PC-3 (cell line): ENCODE measurements at regions of chr1 and their contacts with region 1.

Region 1: DNA sequence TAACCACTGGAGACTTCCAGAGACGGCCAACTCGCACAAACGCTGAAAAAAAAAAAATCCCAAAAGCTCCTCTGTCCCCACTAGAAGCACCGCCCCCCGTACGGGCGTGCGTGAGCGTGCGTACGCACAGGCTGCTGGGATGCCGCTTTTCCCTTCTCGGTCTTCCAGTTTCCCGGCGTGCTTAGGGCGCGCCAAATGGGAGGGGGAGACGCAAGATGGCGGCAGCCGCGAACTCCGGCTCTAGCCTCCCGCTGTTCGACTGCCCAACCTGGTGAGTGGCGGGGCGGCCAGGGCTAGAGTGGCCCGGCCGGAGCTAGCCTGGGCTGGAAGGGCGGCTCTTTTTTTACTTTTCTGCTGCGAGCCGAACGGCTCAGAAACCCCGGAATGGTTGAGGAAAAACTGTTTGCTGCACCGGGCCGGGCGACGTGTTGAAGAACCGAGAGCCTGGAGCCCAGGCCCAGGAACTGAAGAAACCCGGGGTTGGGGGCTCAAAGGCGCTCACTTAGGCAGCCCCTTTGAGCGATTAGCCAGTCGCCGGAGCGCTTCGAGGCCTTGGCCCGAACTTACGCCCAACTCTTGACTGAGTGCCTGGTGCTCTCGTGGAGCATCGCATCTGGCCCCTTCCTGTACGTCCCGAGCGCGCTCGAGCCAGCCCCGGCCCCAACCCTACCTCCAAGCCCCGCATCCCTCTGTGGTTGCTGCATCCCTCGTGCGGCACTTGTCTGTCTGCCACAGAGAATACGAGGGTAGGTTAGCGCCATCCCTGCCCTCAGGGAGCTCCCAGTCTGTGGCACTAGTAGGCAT is at the start of gene PPP1R8:
- DNase-seq: peak; percentile 98
- ATAC-seq: peak; percentile 99
- H3K4me3 ChIP-seq: peak within 1 kb of the TSS; percentile 95
- H3K27ac ChIP-seq: peak within 1 kb of the TSS; percentile 55
- H3K4me1 ChIP-seq: peaks cover 19% of the 10 kb centered on the region
- H3K27me3 ChIP-seq: no peaks in the 10 kb centered on the region
- CTCF ChIP-seq: no peak
- total RNA-seq, gene PPP1R8: 65.7 and 85.0 TPM in 2 replicates

Region 2: GRCh38 chr1:27671964-27672749 is 158.7 kb before region 1 on chr1 and contains the start of gene IFI6:
- CTCF ChIA-PET with region 1: no interaction called
- POLR2A ChIA-PET with region 1: interaction called, 3 read pairs
- intact Hi-C with region 1: loop called (anchors 5 kb)
- DNase-seq: peak; percentile 95
- ATAC-seq: peak; percentile 98
- H3K4me3 ChIP-seq: peak within 1 kb of the TSS; percentile 67
- H3K27ac ChIP-seq: peak within 1 kb of the TSS; percentile 3
- H3K4me1 ChIP-seq: peaks cover 13% of the 10 kb centered on the region; the same call in 1 of the 2 replicates
- H3K27me3 ChIP-seq: no peaks in the 10 kb centered on the region
- CTCF ChIP-seq: peak; percentile 50
- total RNA-seq, gene IFI6: 15.7 and 16.5 TPM in 2 replicates

Region 3: DNA sequence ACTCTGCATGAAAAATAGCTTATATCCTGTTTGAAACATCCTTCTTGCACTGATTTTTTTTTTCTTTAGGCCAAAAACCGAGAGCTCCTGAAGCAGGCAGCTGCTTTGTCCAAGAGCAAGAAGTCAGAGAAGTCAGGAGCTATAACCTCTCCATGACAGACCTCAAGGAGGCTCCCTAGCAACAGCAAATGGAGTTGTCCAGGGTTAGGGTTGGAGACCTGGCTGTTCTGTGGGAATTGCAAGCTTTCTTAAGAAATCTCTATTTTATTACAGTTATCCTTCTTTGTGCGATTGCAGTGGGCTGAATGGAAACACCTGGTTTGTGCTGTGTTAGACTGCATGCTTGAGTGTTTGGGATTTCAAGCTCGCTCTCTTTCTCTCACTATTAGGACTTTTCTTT is 70.4 kb before region 1 on chr1:
- CTCF ChIA-PET with region 1: no interaction called
- POLR2A ChIA-PET with region 1: interaction called, 10 read pairs
- intact Hi-C with region 1: no loop called
- DNase-seq: no peak
- ATAC-seq: no peak
- H3K4me3 ChIP-seq: no peak overlapping the region
- H3K27ac ChIP-seq: no peak overlapping the region
- H3K4me1 ChIP-seq: no peaks in the 10 kb centered on the region
- H3K27me3 ChIP-seq: no peaks in the 10 kb centered on the region
- CTCF ChIP-seq: no peak

Region 4: DNA sequence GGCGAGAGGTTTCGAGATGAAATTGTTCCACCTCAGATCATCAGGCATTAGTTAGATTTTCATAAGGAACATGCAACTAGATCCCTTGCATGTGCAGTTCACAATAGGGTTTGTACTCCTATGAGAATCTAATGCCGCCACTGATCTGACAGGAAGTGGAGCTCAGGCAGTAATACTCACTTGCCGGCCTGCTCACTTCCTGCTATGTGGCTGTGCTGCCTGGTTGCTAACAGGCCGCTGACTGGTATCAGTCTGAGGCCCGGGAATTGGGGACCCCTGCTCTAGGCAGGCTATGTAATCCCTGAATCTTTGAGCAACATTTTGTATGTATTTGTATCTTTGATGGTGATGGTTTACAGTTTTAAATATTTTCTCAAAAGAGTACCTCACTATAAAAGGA is 161.5 kb after region 1 on chr1:
- CTCF ChIA-PET with region 1: no interaction called
- POLR2A ChIA-PET with region 1: interaction called, 12 read pairs
- intact Hi-C with region 1: no loop called
- DNase-seq: no peak
- ATAC-seq: no peak
- H3K4me3 ChIP-seq: no peak overlapping the region
- H3K27ac ChIP-seq: no peak overlapping the region
- H3K4me1 ChIP-seq: no peaks in the 10 kb centered on the region
- H3K27me3 ChIP-seq: no peaks in the 10 kb centered on the region
- CTCF ChIP-seq: no peak